ENCODE measurements at regions of chr2 and their contacts with region 1.

Region 1: DNA sequence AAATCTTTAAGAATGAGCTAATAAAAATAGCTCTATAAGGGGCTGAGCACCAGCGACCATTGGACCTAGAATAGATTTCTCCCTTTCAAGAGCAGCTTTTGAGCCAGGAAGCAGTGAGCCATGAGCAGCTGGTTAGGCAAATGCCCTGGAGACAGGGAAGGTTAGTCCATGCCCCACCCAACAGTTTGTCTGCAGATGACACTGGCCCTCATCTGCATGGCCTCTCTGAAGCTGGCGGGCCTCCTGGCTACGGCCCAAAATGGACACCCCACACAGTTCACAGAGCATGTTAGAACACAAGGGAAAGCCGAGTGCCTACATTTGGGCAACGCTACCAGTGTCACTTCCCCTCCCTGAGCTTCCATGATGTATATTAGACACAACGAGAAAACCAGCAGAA is 201.1 kb downstream of the MGAT5 start:
- DNase-seq: no peak
- H3K4me3 ChIP-seq: no peak overlapping the region
- H3K4me3 Mint-ChIP-seq: peak overlapping the region in 1 of 8 donors; percentile 17
- H3K27ac ChIP-seq: no peak overlapping the region
- H3K27ac Mint-ChIP-seq: peak overlapping the region in 1 of 7 donors; percentile 46
- H3K4me1 ChIP-seq: no peaks in the 10 kb centered on the region
- H3K4me1 Mint-ChIP-seq: peaks cover 0 to 15% (median 0%) of the 10 kb centered on the region in 4 donors
- H3K27me3 ChIP-seq: no peaks in the 10 kb centered on the region
- H3K27me3 Mint-ChIP-seq: no peaks in the 10 kb centered on the region

Region 2: DNA sequence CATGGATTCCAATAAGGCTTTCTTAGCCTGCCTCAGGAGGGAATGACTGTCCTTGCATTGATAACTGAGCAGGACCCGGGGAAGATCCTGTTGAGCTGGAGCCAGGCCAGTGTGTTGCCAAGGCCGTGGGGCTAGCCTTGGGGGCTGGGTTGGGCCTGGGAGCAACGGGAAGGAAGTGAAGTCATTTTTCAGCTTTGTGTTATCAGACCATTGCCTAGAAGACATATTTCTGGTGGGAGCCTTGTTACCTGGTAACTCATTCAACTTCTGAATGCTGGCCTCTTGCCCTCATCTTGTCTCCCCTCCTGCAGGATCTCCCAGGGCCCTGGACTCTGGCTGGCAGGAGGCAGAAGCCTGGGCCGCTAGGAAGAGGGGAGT is 293.8 kb before region 1 on chr2:
- CTCF ChIA-PET with region 1: no interaction called
- POLR2A ChIA-PET with region 1: no interaction called
- intact Hi-C with region 1: no loop called
- DNase-seq: no peak
- H3K4me3 ChIP-seq: no peak overlapping the region
- H3K4me3 Mint-ChIP-seq: peak overlapping the region in 6 of 8 donors; percentile 14 to 62 (median 38)
- H3K27ac ChIP-seq: no peak overlapping the region
- H3K27ac Mint-ChIP-seq: peak overlapping the region; percentile 24 to 86 (median 63)
- H3K4me1 ChIP-seq: peaks cover 62% of the 10 kb centered on the region
- H3K4me1 Mint-ChIP-seq: peaks cover 66 to 97% (median 86%) of the 10 kb centered on the region in 4 donors
- H3K27me3 ChIP-seq: no peaks in the 10 kb centered on the region
- H3K27me3 Mint-ChIP-seq: no peaks in the 10 kb centered on the region

Region 3: GRCh38 chr2:134333646-134334189 is 121.2 kb before region 1 on chr2:
- CTCF ChIA-PET with region 1: no interaction called
- POLR2A ChIA-PET with region 1: no interaction called
- intact Hi-C with region 1: no loop called
- DNase-seq: no peak
- H3K4me3 ChIP-seq: no peak overlapping the region
- H3K4me3 Mint-ChIP-seq: no peak overlapping the region
- H3K27ac ChIP-seq: no peak overlapping the region
- H3K27ac Mint-ChIP-seq: no peak overlapping the region
- H3K4me1 ChIP-seq: no peaks in the 10 kb centered on the region
- H3K4me1 Mint-ChIP-seq: peaks cover 0 to 16% (median 6%) of the 10 kb centered on the region in 4 donors
- H3K27me3 ChIP-seq: no peaks in the 10 kb centered on the region
- H3K27me3 Mint-ChIP-seq: no peaks in the 10 kb centered on the region

Region 4: DNA sequence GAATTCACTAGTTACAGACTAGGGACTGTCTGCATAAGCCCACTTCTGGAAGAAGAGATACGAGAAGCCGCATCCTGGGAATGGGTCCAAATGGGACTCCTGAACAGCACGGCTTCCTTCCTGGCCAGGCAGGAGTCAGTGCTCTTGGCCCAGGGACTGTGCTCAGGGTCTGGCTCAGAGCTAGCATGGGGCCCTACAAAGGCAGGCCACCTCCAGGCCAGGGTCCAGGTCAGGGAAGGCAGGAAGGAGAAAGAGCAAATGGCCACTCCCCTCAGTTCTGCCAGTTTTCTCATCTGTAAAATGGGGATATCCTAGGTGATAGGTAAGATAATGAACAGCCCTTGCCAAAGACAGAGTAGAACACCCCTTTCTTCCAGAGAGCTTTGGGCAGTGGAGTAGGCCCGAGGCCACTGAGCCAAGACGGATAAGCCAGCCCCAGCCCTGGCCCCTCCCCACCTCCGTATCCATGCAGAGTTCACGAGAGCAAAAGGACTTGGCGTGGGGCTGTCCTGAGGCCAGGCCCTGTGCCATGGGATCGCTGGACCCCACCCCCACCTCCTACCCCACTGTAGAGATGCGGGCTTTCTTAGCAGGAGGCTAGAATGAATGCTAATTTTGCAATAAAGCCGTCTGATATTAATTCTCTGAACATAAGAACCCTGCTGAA is 11.0 kb before region 1 on chr2:
- CTCF ChIA-PET with region 1: interaction called, 28 read pairs
- POLR2A ChIA-PET with region 1: interaction called, 3 read pairs
- intact Hi-C with region 1: no loop called
- DNase-seq: no peak
- H3K4me3 ChIP-seq: no peak overlapping the region
- H3K4me3 Mint-ChIP-seq: no peak overlapping the region
- H3K27ac ChIP-seq: no peak overlapping the region
- H3K27ac Mint-ChIP-seq: peak overlapping the region in 3 of 7 donors; percentile 18 to 77 (median 29)
- H3K4me1 ChIP-seq: no peaks in the 10 kb centered on the region
- H3K4me1 Mint-ChIP-seq: peaks cover 0 to 3% (median 0%) of the 10 kb centered on the region in 4 donors
- H3K27me3 ChIP-seq: no peaks in the 10 kb centered on the region
- H3K27me3 Mint-ChIP-seq: no peaks in the 10 kb centered on the region

Region 5: DNA sequence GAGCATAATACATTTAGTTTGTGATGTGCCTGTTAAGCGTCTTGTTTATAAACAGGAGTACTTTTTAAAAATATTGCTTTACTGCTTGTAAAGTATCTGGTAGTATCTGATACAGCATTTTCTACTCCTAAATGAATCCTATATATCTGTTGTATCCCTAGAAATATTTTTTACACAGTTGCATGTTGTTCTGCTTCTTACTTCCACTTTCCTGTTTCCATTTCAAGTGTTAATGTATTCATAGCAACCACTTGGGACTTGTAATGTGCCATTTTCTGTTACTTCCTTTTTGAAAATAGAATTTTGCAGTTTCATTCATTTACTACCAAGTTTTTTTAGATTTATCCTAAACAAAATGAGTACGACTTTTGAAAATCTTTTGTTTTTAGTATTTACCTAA is 488.6 kb after region 1 on chr2:
- CTCF ChIA-PET with region 1: no interaction called
- POLR2A ChIA-PET with region 1: no interaction called
- intact Hi-C with region 1: no loop called
- DNase-seq: no peak
- H3K4me3 ChIP-seq: no peak overlapping the region
- H3K4me3 Mint-ChIP-seq: no peak overlapping the region
- H3K27ac ChIP-seq: no peak overlapping the region
- H3K27ac Mint-ChIP-seq: peak overlapping the region in 1 of 7 donors; percentile 29
- H3K4me1 ChIP-seq: no peaks in the 10 kb centered on the region
- H3K4me1 Mint-ChIP-seq: peaks cover 5 to 19% (median 14%) of the 10 kb centered on the region in 4 donors
- H3K27me3 ChIP-seq: no peaks in the 10 kb centered on the region
- H3K27me3 Mint-ChIP-seq: no peaks in the 10 kb centered on the region

Measured in CD4-positive, alpha-beta memory T cell (primary cell).